ENCODE measurements at regions of chr15 and their contacts with region 1.

Region 1: DNA sequence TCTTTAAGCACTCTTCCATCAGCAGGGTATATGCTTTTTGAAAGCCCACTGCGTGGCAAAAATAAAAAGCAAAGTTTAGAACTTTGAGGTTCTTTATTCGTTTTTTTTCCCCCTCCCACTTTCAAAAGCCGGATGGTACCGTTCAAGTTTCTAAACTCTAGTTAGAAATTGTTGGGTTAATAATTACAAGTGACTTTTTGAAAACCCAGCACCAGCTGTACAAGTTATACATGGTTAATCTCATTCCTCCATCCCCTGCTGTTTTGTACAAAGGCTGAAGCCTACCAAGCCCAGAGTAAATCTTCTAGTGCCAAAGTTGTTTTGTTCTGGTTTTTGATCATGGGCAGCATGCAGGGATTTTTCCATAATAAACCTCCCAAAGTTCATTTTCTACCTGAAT is 48.6 kb downstream of the WDR72 start:
- DNase-seq: no peak
- H3K4me3 ChIP-seq: no peak overlapping the region
- H3K27ac ChIP-seq: no peak overlapping the region
- H3K4me1 ChIP-seq: no peaks in the 10 kb centered on the region
- H3K27me3 ChIP-seq: no peaks in the 10 kb centered on the region
- CTCF ChIP-seq: no peak
- EP300 ChIP-seq: no peak
- POLR2A ChIP-seq: no peak

Region 2: DNA sequence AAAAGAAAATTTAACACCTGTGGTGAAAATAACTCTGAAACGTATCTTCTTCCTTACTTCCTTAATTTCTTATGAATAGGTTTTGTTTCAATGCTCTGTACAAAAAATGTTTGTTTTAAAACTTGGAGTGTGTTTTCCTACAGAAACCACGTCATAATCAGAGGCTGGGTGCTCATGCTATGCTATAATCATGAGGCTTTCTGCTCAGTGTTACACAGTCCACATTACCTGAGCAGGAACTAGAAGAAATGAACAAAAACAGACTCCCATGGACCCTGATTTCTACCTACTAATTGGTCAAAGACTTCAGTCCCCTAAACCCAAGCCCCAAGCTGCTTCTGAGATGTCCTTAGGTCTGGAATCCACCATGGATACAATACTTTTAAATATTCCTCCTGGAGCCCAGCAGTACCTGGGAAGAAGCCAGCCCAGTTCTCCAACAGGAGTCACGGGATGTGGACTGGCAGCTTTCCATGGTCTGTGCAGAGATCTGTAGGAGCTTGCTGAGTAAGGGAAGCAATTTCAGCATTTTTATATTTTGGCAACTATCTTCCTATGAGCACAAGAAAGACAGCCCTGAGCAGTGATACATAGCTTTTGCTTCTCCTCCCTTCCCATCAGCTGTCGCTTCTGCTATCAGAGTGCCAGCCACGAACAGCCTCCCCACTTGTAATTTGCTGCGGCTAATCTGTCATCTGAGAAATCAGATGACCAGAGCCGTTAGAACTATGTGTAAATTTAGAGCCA is 17.0 kb before region 1 on chr15:
- in situ Hi-C with region 1: no loop called
- intact Hi-C with region 1: loop called (anchors 2 kb)
- DNase-seq: peak; percentile 10
- H3K4me3 ChIP-seq: no peak overlapping the region
- H3K27ac ChIP-seq: no peak overlapping the region
- H3K4me1 ChIP-seq: no peaks in the 10 kb centered on the region
- H3K27me3 ChIP-seq: no peaks in the 10 kb centered on the region
- CTCF ChIP-seq: no peak
- EP300 ChIP-seq: no peak
- POLR2A ChIP-seq: no peak

Region 3: GRCh38 chr15:53759411-53759931 is 48.6 kb after region 1 on chr15 and contains the start of gene WDR72:
- in situ Hi-C with region 1: no loop called
- intact Hi-C with region 1: no loop called
- DNase-seq: peak; percentile 17
- H3K4me3 ChIP-seq: peak within 1 kb of the TSS in 2 of 4 donors; percentile 33 to 46
- H3K27ac ChIP-seq: no peak within 1 kb of the TSS
- H3K4me1 ChIP-seq: peaks cover 0 to 10% (median 0%) of the 10 kb centered on the region in 4 donors
- H3K27me3 ChIP-seq: peaks cover 33% of the 10 kb centered on the region
- CTCF ChIP-seq: no peak
- EP300 ChIP-seq: no peak
- POLR2A ChIP-seq: no peak
- total RNA-seq, gene WDR72: 0.14 to 0.16 TPM in 2 of 4 donors, not detected in the others

Region 4: GRCh38 chr15:53918180-53919042 is 207.5 kb after region 1 on chr15:
- in situ Hi-C with region 1: no loop called
- intact Hi-C with region 1: no loop called
- DNase-seq: no peak
- H3K4me3 ChIP-seq: no peak overlapping the region
- H3K27ac ChIP-seq: no peak overlapping the region
- H3K4me1 ChIP-seq: no peaks in the 10 kb centered on the region
- H3K27me3 ChIP-seq: no peaks in the 10 kb centered on the region
- CTCF ChIP-seq: no peak
- EP300 ChIP-seq: no peak
- POLR2A ChIP-seq: no peak